Activated CD4-positive, alpha-beta T cell treated with anti-CD3 and anti-CD28 coated beads for 36 hours (primary cell): ENCODE measurements at regions of chr13 and their contacts with region 1.

Region 1: DNA sequence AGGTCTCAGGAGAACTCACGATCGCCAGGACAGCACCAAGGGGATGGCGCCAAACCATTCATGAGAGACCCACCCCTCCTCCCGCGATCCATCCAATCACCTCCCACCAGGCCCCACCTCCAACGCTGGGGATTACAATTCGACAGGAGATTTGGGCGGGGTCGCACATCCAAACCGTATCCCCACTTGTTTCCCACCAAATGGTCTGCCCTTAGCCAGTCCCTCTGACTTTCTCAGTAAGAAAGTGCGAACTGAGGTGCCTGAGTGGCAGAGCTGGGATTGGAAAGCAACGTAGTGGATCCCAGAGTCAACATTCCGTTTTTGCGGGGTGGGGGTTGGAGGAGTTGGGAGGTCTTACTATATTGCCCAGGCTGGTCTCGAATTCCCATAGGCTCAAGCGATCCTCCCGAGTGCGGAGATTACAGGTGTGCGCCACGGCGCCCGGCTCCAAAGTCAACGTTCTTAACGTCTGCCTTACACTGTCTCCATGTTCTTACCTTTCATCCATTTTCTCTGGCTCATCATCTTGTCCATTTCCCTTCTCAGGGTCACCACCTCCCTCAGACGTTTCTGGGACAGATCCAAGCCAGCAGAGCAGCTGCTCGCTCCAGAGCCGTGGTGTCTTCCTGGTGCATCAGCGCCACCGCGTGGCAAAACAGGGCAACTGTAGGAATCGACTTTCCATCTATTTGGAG is 102.7 kb upstream of the ABCC4 start:
- DNase-seq: peak; percentile 87
- ATAC-seq: peak; percentile 93
- H3K4me3 Mint-ChIP-seq: peak overlapping the region; percentile 76
- H3K27ac Mint-ChIP-seq: peak overlapping the region; percentile 75
- H3K4me1 Mint-ChIP-seq: peaks cover 8% of the 10 kb centered on the region
- H3K27me3 Mint-ChIP-seq: peaks cover 5% of the 10 kb centered on the region

Region 2: DNA sequence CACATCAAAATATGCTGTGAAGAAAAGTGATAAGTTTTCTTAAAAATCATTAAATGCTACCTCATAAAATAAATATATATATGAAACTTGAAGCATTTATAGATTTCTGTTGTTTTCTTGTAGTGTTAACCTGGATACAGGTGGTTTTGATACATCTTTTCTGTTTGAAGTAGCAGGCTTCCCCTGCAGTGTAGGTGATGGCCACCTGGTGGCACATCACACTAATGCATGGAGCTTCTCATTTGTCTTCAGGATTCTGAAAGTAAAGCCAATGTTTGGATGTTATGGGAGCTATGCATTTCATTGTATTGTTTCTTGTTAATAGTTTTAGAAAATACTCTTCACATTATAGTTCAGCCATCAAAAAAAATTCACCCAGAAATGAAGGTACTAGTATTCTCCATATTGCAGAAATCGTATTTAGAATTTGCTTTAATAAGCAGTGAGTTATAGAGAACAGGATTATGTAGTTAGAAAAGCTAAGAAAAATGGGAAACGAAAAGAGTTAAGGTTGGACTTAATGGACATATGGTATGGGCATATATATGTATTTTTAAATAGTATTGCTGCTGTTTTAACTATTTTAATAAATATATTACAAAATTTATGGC is 783.6 kb before region 1 on chr13:
- CTCF ChIA-PET with region 1: interaction called, 6 read pairs
- POLR2A ChIA-PET with region 1: no interaction called
- intact Hi-C with region 1: loop called in 1 of 2 experiments (anchors 1 kb)
- DNase-seq: peak; percentile 51
- ATAC-seq: peak; percentile 63
- H3K4me3 Mint-ChIP-seq: no peak overlapping the region
- H3K27ac Mint-ChIP-seq: no peak overlapping the region
- H3K4me1 Mint-ChIP-seq: peaks cover 10% of the 10 kb centered on the region
- H3K27me3 Mint-ChIP-seq: no peaks in the 10 kb centered on the region

Region 3: GRCh38 chr13:95191821-95192563 is 212.0 kb before region 1 on chr13:
- CTCF ChIA-PET with region 1: interaction called, 97 read pairs
- POLR2A ChIA-PET with region 1: no interaction called
- intact Hi-C with region 1: loop called (anchors 1 kb)
- DNase-seq: peak; percentile 85
- ATAC-seq: peak; percentile 91
- H3K4me3 Mint-ChIP-seq: no peak overlapping the region
- H3K27ac Mint-ChIP-seq: no peak overlapping the region
- H3K4me1 Mint-ChIP-seq: peaks cover 9% of the 10 kb centered on the region
- H3K27me3 Mint-ChIP-seq: no peaks in the 10 kb centered on the region

Region 4: GRCh38 chr13:95301183-95301967 is 102.6 kb before region 1 on chr13 and contains the start of gene ABCC4:
- CTCF ChIA-PET with region 1: interaction called, 19 read pairs
- POLR2A ChIA-PET with region 1: no interaction called
- intact Hi-C with region 1: loop called in 1 of 2 experiments (anchors 2 kb)
- DNase-seq: peak; percentile 76
- ATAC-seq: peak; percentile 81
- H3K4me3 Mint-ChIP-seq: peak within 1 kb of the TSS; percentile 78
- H3K27ac Mint-ChIP-seq: peak within 1 kb of the TSS; percentile 66
- H3K4me1 Mint-ChIP-seq: peaks cover 43% of the 10 kb centered on the region
- H3K27me3 Mint-ChIP-seq: peaks cover 8% of the 10 kb centered on the region
- total RNA-seq, gene ABCC4: 9.0 to 9.5 TPM

Region 5: DNA sequence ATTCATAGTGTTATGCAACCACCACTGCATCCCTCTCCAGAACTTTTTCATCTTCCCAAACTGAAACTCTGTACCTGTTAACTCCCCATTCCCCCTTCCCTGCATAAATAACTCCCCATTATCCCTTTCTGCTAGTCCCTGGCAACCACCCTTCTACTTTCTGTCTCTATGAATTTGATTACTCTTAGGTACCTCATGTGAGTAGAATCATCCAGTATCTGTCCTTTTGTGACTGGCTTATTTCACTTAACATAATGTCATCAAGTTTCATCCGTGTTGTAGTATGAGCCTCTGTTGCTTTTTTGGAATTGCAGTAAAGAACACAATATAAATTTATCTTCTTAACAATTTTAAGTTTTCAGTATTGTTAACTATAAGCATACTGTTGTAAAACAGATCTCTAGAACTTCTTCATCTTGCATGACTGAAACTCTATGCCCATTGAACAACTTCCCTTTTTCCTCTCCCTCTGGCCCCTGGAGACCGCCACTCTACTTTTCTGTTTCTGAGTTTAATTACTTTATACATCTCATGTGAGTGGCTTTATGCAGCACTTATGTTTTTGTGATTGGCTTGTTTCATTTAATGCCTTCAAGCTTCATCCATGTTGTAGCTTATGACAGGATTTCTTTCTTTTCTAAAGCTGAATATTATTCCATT is 15.4 kb before region 1 on chr13:
- CTCF ChIA-PET with region 1: interaction called, 21 read pairs
- POLR2A ChIA-PET with region 1: no interaction called
- intact Hi-C with region 1: no loop called
- DNase-seq: no peak
- ATAC-seq: no peak
- H3K4me3 Mint-ChIP-seq: no peak overlapping the region
- H3K27ac Mint-ChIP-seq: no peak overlapping the region
- H3K4me1 Mint-ChIP-seq: no peaks in the 10 kb centered on the region
- H3K27me3 Mint-ChIP-seq: peaks cover 23% of the 10 kb centered on the region

Region 6: GRCh38 chr13:95480131-95480545 is 76.2 kb after region 1 on chr13:
- CTCF ChIA-PET with region 1: interaction called, 13 read pairs
- POLR2A ChIA-PET with region 1: no interaction called
- intact Hi-C with region 1: loop called (anchors 2 to 5 kb)
- DNase-seq: peak; percentile 27
- ATAC-seq: peak; percentile 44
- H3K4me3 Mint-ChIP-seq: no peak overlapping the region
- H3K27ac Mint-ChIP-seq: no peak overlapping the region
- H3K4me1 Mint-ChIP-seq: peaks cover 8% of the 10 kb centered on the region
- H3K27me3 Mint-ChIP-seq: no peaks in the 10 kb centered on the region